Activated B cell treated with CpG ODN at 0.5 μM for 24 hours (primary cell): ENCODE measurements at regions of chr5 and their contacts with region 1.

Region 1: GRCh38 chr5:140647042-140647341 is 438 bp downstream of the NDUFA2 start:
- DNase-seq: no peak
- ATAC-seq: no peak
- H3K4me3 Mint-ChIP-seq: peak overlapping the region; percentile 99
- H3K27ac Mint-ChIP-seq: peak overlapping the region; percentile 98
- H3K4me1 Mint-ChIP-seq: peaks cover 38% of the 10 kb centered on the region
- H3K27me3 Mint-ChIP-seq: no peaks in the 10 kb centered on the region
- CTCF ChIP-seq: no peak

Region 2: DNA sequence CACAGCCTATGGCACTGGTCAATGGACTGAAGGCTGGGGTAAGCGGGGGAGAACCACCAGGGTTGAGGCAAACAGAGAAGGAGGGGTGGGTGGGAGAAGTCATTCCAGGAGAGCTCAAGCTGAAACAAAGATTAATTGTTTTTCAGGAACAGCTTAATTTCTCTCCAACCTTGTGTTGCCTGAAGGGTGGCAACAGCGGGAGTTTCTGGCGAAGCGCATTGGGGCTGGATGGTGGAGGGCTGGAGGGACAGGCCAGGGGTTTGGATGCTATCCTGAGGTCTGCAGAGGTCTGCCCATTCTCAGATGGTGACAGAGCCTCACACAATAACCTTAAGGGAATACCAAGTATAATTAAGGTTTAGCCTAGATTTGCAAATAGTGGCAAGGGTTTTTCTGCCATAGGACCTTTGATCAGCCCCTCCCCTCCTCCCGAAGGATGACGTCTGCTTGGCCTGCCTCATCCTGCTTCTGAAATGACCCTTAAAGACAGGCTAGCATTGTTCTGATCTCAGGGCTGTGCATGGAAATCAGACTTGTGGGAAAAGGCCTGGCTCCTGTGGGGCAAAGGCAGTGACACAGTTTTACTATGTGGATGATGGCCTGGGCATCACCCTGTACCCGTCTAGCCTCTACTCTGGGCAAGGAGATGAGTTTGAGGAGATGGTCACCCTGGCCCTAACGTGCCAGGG is 818.6 kb before region 1 on chr5:
- CTCF ChIA-PET with region 1: no interaction called
- POLR2A ChIA-PET with region 1: no interaction called
- intact Hi-C with region 1: no loop called
- DNase-seq: no peak
- ATAC-seq: no peak
- H3K4me3 Mint-ChIP-seq: no peak overlapping the region
- H3K27ac Mint-ChIP-seq: no peak overlapping the region
- H3K4me1 Mint-ChIP-seq: no peaks in the 10 kb centered on the region
- H3K27me3 Mint-ChIP-seq: peaks cover 20% of the 10 kb centered on the region
- CTCF ChIP-seq: no peak

Region 3: GRCh38 chr5:140391312-140391711 is 255.7 kb before region 1 on chr5:
- CTCF ChIA-PET with region 1: no interaction called
- POLR2A ChIA-PET with region 1: no interaction called
- intact Hi-C with region 1: no loop called
- DNase-seq: no peak
- ATAC-seq: no peak
- H3K4me3 Mint-ChIP-seq: no peak overlapping the region
- H3K27ac Mint-ChIP-seq: no peak overlapping the region
- H3K4me1 Mint-ChIP-seq: no peaks in the 10 kb centered on the region
- H3K27me3 Mint-ChIP-seq: no peaks in the 10 kb centered on the region
- CTCF ChIP-seq: no peak

Region 4: GRCh38 chr5:140547508-140548299 is 99.3 kb before region 1 on chr5 and contains the start of gene EIF4EBP3:
- CTCF ChIA-PET with region 1: interaction called, 12 read pairs
- POLR2A ChIA-PET with region 1: interaction called, 11 read pairs
- intact Hi-C with region 1: no loop called
- DNase-seq: peak; percentile 74
- ATAC-seq: peak; percentile 97
- H3K4me3 Mint-ChIP-seq: peak within 1 kb of the TSS; percentile 86
- H3K27ac Mint-ChIP-seq: peak within 1 kb of the TSS; percentile 95
- H3K4me1 Mint-ChIP-seq: peaks cover 28% of the 10 kb centered on the region
- H3K27me3 Mint-ChIP-seq: no peaks in the 10 kb centered on the region
- CTCF ChIP-seq: no peak
- total RNA-seq, gene EIF4EBP3: 14.4 and 18.2 TPM in 2 replicates

Region 5: DNA sequence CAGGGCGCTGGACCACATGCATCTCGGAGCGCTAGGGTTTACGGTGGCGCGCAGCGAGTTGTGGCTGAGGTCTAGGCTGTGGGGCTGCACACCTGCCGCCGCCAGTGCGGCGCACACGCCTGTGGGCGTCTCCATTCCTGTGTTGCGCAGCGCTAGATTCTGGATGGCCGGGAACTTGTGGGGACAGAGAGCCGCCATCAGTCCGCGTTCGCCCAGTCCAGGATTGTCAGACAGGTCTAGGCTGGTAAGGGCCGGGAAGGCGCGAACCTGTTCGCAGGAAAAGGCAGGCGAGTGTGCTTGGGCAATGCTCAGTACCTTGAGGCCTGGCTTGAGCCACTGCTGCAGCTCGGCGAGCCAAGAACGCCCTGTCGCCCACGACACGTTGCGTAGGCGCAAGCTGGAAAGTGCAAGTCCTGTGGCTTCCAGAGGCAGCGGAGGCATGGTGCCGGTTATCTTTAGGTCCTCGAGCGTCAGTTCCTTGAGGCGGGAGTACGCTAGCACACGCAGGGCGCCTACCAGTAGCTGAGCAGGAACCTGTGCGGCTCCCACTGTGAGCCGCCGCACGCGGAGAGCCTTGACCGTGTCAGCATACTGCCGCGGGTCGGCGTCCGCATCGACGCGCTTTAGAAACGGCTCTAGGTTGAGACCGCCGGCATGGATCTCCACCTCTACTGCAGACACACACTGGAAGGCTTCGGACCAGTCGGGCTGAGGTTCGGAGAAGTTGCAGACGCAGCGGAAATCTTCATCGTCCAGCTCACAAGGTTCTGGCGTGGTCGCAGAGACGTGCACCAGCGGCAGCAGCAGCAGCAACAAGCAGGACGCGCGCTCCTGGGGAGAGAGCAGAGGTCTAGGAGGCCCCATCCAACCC is 14.6 kb before region 1 on chr5:
- CTCF ChIA-PET with region 1: interaction called, 10 read pairs
- POLR2A ChIA-PET with region 1: interaction called, 8 read pairs
- intact Hi-C with region 1: loop called (anchors 2 kb)
- DNase-seq: peak; percentile 43
- ATAC-seq: peak; percentile 77
- H3K4me3 Mint-ChIP-seq: peak overlapping the region; percentile 87
- H3K27ac Mint-ChIP-seq: no peak overlapping the region
- H3K4me1 Mint-ChIP-seq: peaks cover 33% of the 10 kb centered on the region
- H3K27me3 Mint-ChIP-seq: peaks cover 18% of the 10 kb centered on the region
- CTCF ChIP-seq: no peak

Region 6: DNA sequence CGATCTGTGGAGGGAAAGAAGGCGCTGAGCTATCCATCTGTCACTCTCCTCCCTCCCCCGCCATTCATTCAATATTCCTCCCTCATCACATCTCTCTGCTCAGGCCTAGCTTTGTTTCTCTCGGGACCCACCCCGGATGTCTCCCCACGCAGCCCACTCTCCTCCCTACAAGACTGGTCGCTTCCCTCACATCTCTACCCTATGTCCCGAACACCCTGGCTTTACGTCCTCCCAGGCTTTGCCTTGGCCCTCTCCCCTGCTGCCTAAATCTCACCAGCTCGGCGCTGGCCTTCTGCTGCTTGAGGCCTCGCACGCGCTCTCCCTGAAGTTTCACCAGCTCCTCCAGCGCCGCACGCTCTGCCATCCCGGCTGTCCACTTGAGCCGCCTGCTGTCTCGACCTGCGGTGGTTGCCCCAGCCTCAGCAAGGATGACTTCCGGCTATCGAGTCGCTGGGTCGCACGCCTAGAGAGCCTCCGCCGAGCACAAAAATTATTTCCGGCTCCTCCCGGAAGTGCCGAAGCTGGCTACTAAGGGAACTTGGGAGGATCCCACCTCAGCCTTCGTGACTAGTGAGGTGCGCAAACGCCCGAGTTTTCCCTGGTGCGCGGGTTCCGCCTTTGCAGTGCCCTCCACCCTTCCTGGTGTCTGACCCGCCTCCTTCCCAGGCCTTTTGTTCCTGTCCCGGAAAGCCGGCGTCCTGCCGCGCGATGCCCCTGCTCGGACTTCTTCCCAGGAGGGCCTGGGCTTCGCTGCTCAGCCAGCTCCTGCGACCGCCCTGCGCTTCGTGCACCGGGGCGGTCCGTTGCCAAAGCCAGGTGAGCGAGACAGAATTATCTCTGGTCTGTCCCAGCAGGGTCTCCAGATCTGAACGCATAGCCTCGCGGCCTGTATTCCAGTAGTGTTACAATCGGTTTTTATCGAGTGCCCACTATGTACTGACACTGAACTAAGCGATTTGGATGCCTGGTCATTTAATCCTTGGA is 44.2 kb after region 1 on chr5 and contains the starts of genes HARS1 and HARS2:
- CTCF ChIA-PET with region 1: interaction called, 3 read pairs
- POLR2A ChIA-PET with region 1: interaction called, 25 read pairs
- intact Hi-C with region 1: loop called (anchors 1 kb)
- DNase-seq: peak; percentile 70
- ATAC-seq: peak; percentile 95
- H3K4me3 Mint-ChIP-seq: peak within 1 kb of the TSS; percentile 100
- H3K27ac Mint-ChIP-seq: peak within 1 kb of the TSS; percentile 97
- H3K4me1 Mint-ChIP-seq: peaks cover 31% of the 10 kb centered on the region
- H3K27me3 Mint-ChIP-seq: no peaks in the 10 kb centered on the region
- CTCF ChIP-seq: no peak
- total RNA-seq, gene HARS1: 78.2 and 84.0 TPM in 2 replicates
- total RNA-seq, gene HARS2: 45.7 and 48.5 TPM in 2 replicates